HepG2 (cell line): ENCODE measurements at regions of chr1 and their contacts with region 1.

Region 1: DNA sequence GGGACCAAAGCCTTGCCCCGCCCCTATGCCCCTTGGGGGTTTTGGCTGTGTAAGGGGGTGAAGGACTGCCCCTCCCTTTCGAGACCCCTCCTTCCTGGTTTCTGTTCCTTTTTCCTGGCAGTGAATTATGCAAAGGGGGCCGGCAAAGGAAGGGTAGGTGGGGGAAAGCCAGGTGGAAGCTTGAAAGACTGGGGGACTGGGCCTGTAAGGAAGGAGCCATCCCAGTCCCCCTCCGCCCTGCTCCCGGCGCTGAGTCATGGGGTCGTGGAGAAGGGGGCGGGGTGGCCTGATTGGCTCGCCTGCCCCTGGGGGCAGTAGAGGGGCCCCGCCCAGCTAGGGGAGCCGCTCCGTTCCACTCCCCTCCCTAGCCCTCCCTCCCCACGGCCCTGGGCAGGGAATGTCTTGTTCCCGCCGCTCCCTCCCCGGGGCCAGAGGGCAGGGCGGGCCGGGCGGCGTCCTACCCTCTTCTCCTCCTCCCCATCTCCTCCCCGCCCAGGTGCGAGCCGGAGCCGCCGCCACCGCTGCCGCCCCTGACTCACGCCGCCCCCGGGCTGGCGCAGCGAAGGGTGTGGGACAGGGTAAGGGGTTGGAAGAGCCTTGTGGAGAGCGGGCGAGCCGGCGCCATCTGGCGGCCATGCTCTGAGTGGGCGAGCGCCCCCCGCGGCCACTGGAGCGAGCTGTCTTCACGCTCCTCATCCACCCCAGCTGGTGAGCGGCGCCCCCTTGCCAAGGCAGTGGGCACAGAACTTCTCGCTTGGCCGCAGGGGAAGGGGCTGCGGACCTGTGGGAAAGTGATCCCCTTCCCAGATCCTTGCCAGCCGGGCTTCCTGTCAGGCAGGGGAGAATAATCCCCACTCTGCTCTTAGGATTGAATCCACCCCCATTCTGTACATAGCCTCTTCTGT is 14.7 kb downstream of the ZBTB7B start:
- DNase-seq: peak; percentile 88
- ATAC-seq: peak; percentile 88
- H3K4me3 ChIP-seq: peak overlapping the region in 2 of 3 experiments; percentile 48 to 61; a peak in 5 of 6 replicates
- H3K27ac ChIP-seq: peak overlapping the region; percentile 74
- H3K4me1 ChIP-seq: peaks cover 43% of the 10 kb centered on the region
- H3K27me3 ChIP-seq: no peaks in the 10 kb centered on the region
- CTCF ChIP-seq: peak; percentile 99
- EP300 ChIP-seq: peak in 1 of 2 experiments; percentile 20; a peak in 1 of 4 replicates
- POLR2A ChIP-seq: peak in 1 of 2 experiments; percentile 42; a peak in 1 of 4 replicates
- RAD21 ChIP-seq: peak; percentile 99

Region 2: GRCh38 chr1:154906621-154907081 is 110.6 kb before region 1 on chr1:
- CTCF ChIA-PET with region 1: interaction called, 15 read pairs
- POLR2A ChIA-PET with region 1: no interaction called
- in situ Hi-C with region 1: no loop called
- intact Hi-C with region 1: loop called (anchors 1 kb)
- DNase-seq: peak; percentile 52
- ATAC-seq: peak; percentile 88
- H3K4me3 ChIP-seq: no peak overlapping the region
- H3K27ac ChIP-seq: no peak overlapping the region
- H3K4me1 ChIP-seq: peaks cover 20% of the 10 kb centered on the region
- H3K27me3 ChIP-seq: no peaks in the 10 kb centered on the region
- CTCF ChIP-seq: peak; percentile 94
- EP300 ChIP-seq: no peak
- POLR2A ChIP-seq: no peak
- RAD21 ChIP-seq: peak; percentile 86

Region 3: GRCh38 chr1:154955718-154956543 is 61.4 kb before region 1 on chr1 and contains the start of gene PBXIP1:
- CTCF ChIA-PET with region 1: interaction called, 24 read pairs
- POLR2A ChIA-PET with region 1: interaction called, 12 read pairs
- in situ Hi-C with region 1: no loop called
- intact Hi-C with region 1: no loop called
- DNase-seq: peak; percentile 94
- ATAC-seq: peak; percentile 81
- H3K4me3 ChIP-seq: peak within 1 kb of the TSS; percentile 66 to 72 (median 69)
- H3K27ac ChIP-seq: peak within 1 kb of the TSS; percentile 96
- H3K4me1 ChIP-seq: peaks cover 55% of the 10 kb centered on the region
- H3K27me3 ChIP-seq: no peaks in the 10 kb centered on the region; a peak in 1 of 5 replicates
- CTCF ChIP-seq: 0 out of 2 replicates have a peak, but pooled peaks have one; percentile 1
- EP300 ChIP-seq: no peak
- POLR2A ChIP-seq: peak in 1 of 2 experiments; percentile 55; a peak in 2 of 4 replicates
- RAD21 ChIP-seq: 0 out of 2 replicates have a peak, but pooled peaks have one; percentile 13
- total RNA-seq, gene PBXIP1: 7.3 and 16.3 TPM in 2 replicates

Region 4: DNA sequence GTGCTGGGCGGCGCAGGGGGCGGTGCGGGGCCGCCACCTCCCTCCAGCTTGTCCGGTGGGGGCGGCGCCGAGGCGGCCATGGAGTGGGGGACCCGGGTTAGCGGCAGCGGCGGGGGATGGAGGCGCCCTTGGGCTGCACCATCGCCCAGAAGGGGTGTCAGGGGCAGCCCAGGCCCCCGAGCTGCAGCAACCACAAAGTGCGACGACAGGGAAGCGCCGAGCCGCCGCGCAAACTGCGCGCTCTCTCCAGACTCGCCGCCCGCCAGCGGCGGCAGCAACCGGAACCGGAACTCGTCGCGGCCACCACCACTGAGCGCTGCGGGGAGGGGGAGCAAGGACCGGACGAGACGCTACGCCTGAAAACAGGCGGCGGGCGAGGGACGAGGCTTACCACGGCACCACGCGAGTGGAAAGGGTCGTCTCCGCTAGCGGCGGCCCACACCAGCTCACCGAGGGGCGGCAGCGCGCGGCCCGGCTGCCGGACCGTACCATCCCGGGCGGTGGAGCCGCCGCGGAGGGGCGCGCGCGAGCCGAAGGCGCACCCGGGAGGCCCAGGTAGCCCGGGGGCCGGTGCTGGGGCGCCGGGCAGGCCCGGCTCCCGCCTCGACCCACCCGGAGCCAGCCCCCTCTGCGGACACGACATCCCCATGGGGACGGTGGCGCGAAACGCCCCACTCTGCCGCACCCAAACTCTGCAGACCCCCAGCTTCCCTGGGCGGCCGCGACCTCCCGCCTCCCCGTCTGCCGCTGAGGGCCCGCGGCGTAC is 55.6 kb before region 1 on chr1 and contains the start of gene PYGO2:
- CTCF ChIA-PET with region 1: interaction called, 24 read pairs
- POLR2A ChIA-PET with region 1: interaction called, 8 read pairs
- in situ Hi-C with region 1: no loop called
- intact Hi-C with region 1: no loop called
- DNase-seq: peak; percentile 48
- ATAC-seq: peak; percentile 87
- H3K4me3 ChIP-seq: peak within 1 kb of the TSS; percentile 72 to 87 (median 80)
- H3K27ac ChIP-seq: peak within 1 kb of the TSS; percentile 96
- H3K4me1 ChIP-seq: peaks cover 48% of the 10 kb centered on the region
- H3K27me3 ChIP-seq: no peaks in the 10 kb centered on the region; a peak in 1 of 5 replicates
- CTCF ChIP-seq: peak; percentile 75
- EP300 ChIP-seq: 0 out of 4 replicates have a peak, but pooled peaks of 1 of the 2 experiments have one; percentile 3
- POLR2A ChIP-seq: peak; percentile 72 to 84
- RAD21 ChIP-seq: peak; percentile 95
- total RNA-seq, gene PYGO2: 20.3 and 21.3 TPM in 2 replicates

Region 5: GRCh38 chr1:154982897-154983648 is 34.2 kb before region 1 on chr1 and contains the start of gene FLAD1:
- CTCF ChIA-PET with region 1: interaction called, 13 read pairs
- POLR2A ChIA-PET with region 1: interaction called, 10 read pairs
- in situ Hi-C with region 1: no loop called
- intact Hi-C with region 1: no loop called
- DNase-seq: peak; percentile 99
- ATAC-seq: peak; percentile 99
- H3K4me3 ChIP-seq: peak within 1 kb of the TSS; percentile 74 to 86 (median 76)
- H3K27ac ChIP-seq: peak within 1 kb of the TSS; percentile 64
- H3K4me1 ChIP-seq: peaks cover 34% of the 10 kb centered on the region
- H3K27me3 ChIP-seq: no peaks in the 10 kb centered on the region
- CTCF ChIP-seq: no peak
- EP300 ChIP-seq: no peak
- POLR2A ChIP-seq: peak; percentile 56 to 71; a peak in 3 of 4 replicates
- RAD21 ChIP-seq: no peak
- total RNA-seq, gene FLAD1: 32.8 and 32.9 TPM in 2 replicates

Region 6: GRCh38 chr1:154992721-154993571 is 24.3 kb before region 1 on chr1:
- CTCF ChIA-PET with region 1: interaction called, 54 read pairs
- POLR2A ChIA-PET with region 1: interaction called, 4 read pairs
- in situ Hi-C with region 1: no loop called
- intact Hi-C with region 1: no loop called
- DNase-seq: no peak
- ATAC-seq: peak; percentile 63
- H3K4me3 ChIP-seq: no peak overlapping the region
- H3K27ac ChIP-seq: no peak overlapping the region
- H3K4me1 ChIP-seq: peaks cover 17% of the 10 kb centered on the region
- H3K27me3 ChIP-seq: no peaks in the 10 kb centered on the region
- CTCF ChIP-seq: peak; percentile 47
- EP300 ChIP-seq: no peak
- POLR2A ChIP-seq: no peak
- RAD21 ChIP-seq: 0 out of 2 replicates have a peak, but pooled peaks have one; percentile 33

Region 7: DNA sequence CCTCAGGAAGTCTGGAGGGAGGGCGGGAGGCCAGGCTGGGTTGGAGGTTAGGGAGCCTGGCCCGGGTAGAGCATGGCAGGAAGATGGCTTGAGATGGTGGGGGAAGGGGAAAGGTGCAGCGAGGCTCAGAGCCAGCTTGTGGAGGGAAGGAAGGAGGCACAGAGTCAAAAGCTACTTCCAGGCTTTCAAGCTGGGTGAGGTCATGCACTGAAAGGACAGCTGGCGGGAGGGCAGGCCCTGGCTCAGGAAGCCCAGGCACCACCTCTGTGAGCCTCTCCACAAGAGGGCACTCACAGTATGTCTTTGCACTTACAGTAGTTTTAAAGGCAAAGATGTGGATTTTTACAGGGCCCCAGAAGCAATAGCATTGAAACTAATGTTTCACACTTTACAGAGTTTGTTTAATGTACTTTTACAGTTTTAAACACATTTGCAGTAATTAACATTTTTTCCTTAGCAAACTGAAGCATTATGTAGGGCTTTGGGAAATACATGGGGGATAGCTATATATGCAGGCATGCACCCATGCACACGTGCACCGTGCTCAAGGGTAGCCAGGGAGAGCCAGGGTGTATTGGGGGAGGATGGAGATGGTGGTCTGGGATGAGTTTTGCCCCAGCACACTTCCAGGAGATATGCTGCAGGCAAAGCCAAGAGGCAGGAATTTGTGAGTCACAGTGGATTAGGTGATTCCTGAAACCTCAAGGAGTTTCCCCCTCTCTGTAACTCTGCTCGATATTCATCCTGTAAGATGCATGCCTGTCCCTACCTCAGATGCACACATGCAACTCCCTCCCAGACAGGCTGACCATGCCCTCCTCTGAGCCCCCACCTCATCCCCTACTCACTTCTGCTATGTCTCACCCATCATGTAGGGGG is 27.8 kb after region 1 on chr1:
- CTCF ChIA-PET with region 1: interaction called, 7 read pairs
- POLR2A ChIA-PET with region 1: interaction called, 12 read pairs
- in situ Hi-C with region 1: no loop called
- intact Hi-C with region 1: no loop called
- DNase-seq: peak; percentile 79
- ATAC-seq: peak; percentile 85
- H3K4me3 ChIP-seq: peak overlapping the region in 1 of 3 experiments; percentile 8; a peak in 1 of 6 replicates
- H3K27ac ChIP-seq: no peak overlapping the region
- H3K4me1 ChIP-seq: peaks cover 69% of the 10 kb centered on the region
- H3K27me3 ChIP-seq: peaks cover 7 to 21% of the 10 kb centered on the region in 2 experiments
- CTCF ChIP-seq: peak; percentile 89
- EP300 ChIP-seq: no peak
- POLR2A ChIP-seq: no peak
- RAD21 ChIP-seq: peak; percentile 81